Pancreas (tissue), 10 donors: ENCODE measurements at regions of chr13 and their contacts with region 1.

Region 1: GRCh38 chr13:50085063-50085462 is 69.8 kb downstream of the KCNRG start:
- DNase-seq: no peak
- ATAC-seq: no peak
- H3K4me3 ChIP-seq: no peak overlapping the region
- H3K27ac ChIP-seq: no peak overlapping the region
- H3K4me1 ChIP-seq: peaks cover 0 to 9% (median 7%) of the 10 kb centered on the region in 3 donors
- H3K27me3 ChIP-seq: no peaks in the 10 kb centered on the region
- CTCF ChIP-seq: peak in 3 of 4 donors; percentile 36 to 58 (median 51)

Region 2: GRCh38 chr13:49828458-49828857 is 256.6 kb before region 1 on chr13:
- intact Hi-C with region 1: no loop called
- DNase-seq: no peak
- ATAC-seq: peak in 1 of 4 donors; percentile 39
- H3K4me3 ChIP-seq: no peak overlapping the region
- H3K27ac ChIP-seq: no peak overlapping the region
- H3K4me1 ChIP-seq: no peaks in the 10 kb centered on the region
- H3K27me3 ChIP-seq: no peaks in the 10 kb centered on the region
- CTCF ChIP-seq: no peak

Region 3: GRCh38 chr13:50529154-50529882 is 444.3 kb after region 1 on chr13:
- intact Hi-C with region 1: loop called in 1 of 3 experiments (anchors 5 kb)
- DNase-seq: peak; percentile 73 to 96 (median 82)
- ATAC-seq: peak; percentile 84 to 95 (median 91)
- H3K4me3 ChIP-seq: no peak overlapping the region
- H3K27ac ChIP-seq: peak overlapping the region in 3 of 4 donors; percentile 11 to 25 (median 15)
- H3K4me1 ChIP-seq: peaks cover 8 to 29% (median 19%) of the 10 kb centered on the region in 3 donors
- H3K27me3 ChIP-seq: no peaks in the 10 kb centered on the region
- CTCF ChIP-seq: no peak

Region 4: GRCh38 chr13:50801087-50801931 is 716.2 kb after region 1 on chr13:
- intact Hi-C with region 1: loop called in 1 of 3 experiments (anchors 5 kb)
- DNase-seq: peak in 4 of 6 donors; percentile 25 to 65 (median 35)
- ATAC-seq: peak; percentile 83 to 99 (median 97)
- H3K4me3 ChIP-seq: no peak overlapping the region
- H3K27ac ChIP-seq: no peak overlapping the region
- H3K4me1 ChIP-seq: peaks cover 0 to 7% (median 0%) of the 10 kb centered on the region in 3 donors
- H3K27me3 ChIP-seq: no peaks in the 10 kb centered on the region
- CTCF ChIP-seq: peak in 3 of 4 donors; percentile 42 to 62 (median 60)